Lower leg skin (tissue), 4 donors: ENCODE measurements at regions of chr3 and their contacts with region 1.

Region 1: GRCh38 chr3:72240531-72240930 is 455.6 kb upstream of the PROK2 start:
- DNase-seq: no peak
- H3K4me3 ChIP-seq: no peak overlapping the region
- CTCF ChIP-seq: no peak
- POLR2A ChIP-seq: no peak

Region 2: GRCh38 chr3:72213296-72214065 is 27.1 kb before region 1 on chr3:
- intact Hi-C with region 1: loop called (anchors 1 kb)
- DNase-seq: no peak
- H3K4me3 ChIP-seq: no peak overlapping the region
- CTCF ChIP-seq: no peak
- POLR2A ChIP-seq: no peak